GM12878 (cell line): ENCODE measurements at regions of chr4 and their contacts with region 1.

Region 1: GRCh38 chr4:48016141-48017103 is at the starts of genes CNGA1 and NIPAL1:
- DNase-seq: no peak
- ATAC-seq: peak; percentile 95
- H3K4me3 ChIP-seq: peak within 1 kb of the TSS; percentile 89
- H3K27ac ChIP-seq: peak within 1 kb of the TSS; percentile 30; the same call in 1 of the 2 replicates
- H3K4me1 ChIP-seq: no peaks in the 10 kb centered on the region
- H3K27me3 ChIP-seq: no peaks in the 10 kb centered on the region; a peak in 1 of 4 replicates
- CTCF ChIP-seq: peak; percentile 41 to 52 (median 48); a peak in 5 of 6 replicates
- EP300 ChIP-seq: no peak
- POLR2A ChIP-seq: peak; percentile 63
- RAD21 ChIP-seq: peak; percentile 58
- polyA plus RNA-seq, gene CNGA1: 7.9 to 8.9 TPM
- polyA plus RNA-seq, gene NIPAL1: 1.1 to 2.0 TPM

Region 2: GRCh38 chr4:48027653-48028052 is 11.2 kb after region 1 on chr4:
- CTCF ChIA-PET with region 1: interaction called, 21 read pairs
- POLR2A ChIA-PET with region 1: no interaction called
- RAD21 ChIA-PET with region 1: interaction called, 3 read pairs
- SMC1A ChIA-PET with region 1: interaction called, 19 read pairs
- in situ Hi-C with region 1: no loop called
- intact Hi-C with region 1: no loop called
- DNase-seq: no peak
- ATAC-seq: peak; percentile 92
- H3K4me3 ChIP-seq: no peak overlapping the region; the same call in 1 of the 2 replicates
- H3K27ac ChIP-seq: peak overlapping the region; percentile 36; the same call in 1 of the 2 replicates
- H3K4me1 ChIP-seq: peaks cover 31% of the 10 kb centered on the region
- H3K27me3 ChIP-seq: no peaks in the 10 kb centered on the region
- CTCF ChIP-seq: no peak
- EP300 ChIP-seq: peak in 1 of 2 experiments; percentile 19; a peak in 2 of 4 replicates
- POLR2A ChIP-seq: no peak
- RAD21 ChIP-seq: no peak